Panc1 (cell line): ENCODE measurements at regions of chr15 and their contacts with region 1.

Region 1: GRCh38 chr15:77533578-77534430 is 98.9 kb downstream of the LINGO1 start:
- DNase-seq: no peak
- ATAC-seq: no peak
- H3K4me3 ChIP-seq: no peak overlapping the region
- H3K27ac ChIP-seq: peak overlapping the region; percentile 41; the same call in 1 of the 2 replicates
- H3K4me1 ChIP-seq: peaks cover 18% of the 10 kb centered on the region
- H3K27me3 ChIP-seq: no peaks in the 10 kb centered on the region
- CTCF ChIP-seq: no peak

Region 2: DNA sequence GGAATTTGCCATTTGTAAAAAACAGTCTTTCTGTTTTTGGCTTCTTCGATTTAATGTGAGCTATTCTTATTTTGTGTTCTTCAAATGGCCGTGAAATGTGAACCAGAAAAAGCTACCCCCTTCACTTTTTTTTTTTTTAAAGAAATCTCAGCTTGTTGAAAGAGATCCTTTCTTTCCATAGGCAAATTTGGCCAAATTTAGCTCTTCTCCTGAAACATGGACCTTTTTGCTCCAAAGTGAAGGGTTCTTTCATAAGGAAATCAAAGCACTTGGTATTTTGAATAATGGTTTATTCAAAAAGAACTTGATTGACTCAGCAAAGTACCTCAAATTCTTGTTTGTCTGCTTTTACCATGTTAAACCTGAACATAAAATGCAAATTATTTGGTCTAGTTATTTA is 592.2 kb before region 1 on chr15:
- CTCF ChIA-PET with region 1: no interaction called
- POLR2A ChIA-PET with region 1: interaction called, 13 read pairs
- in situ Hi-C with region 1: no loop called
- intact Hi-C with region 1: no loop called
- DNase-seq: no peak
- ATAC-seq: no peak
- H3K4me3 ChIP-seq: no peak overlapping the region
- H3K27ac ChIP-seq: no peak overlapping the region
- H3K4me1 ChIP-seq: no peaks in the 10 kb centered on the region
- H3K27me3 ChIP-seq: no peaks in the 10 kb centered on the region
- CTCF ChIP-seq: no peak

Region 3: GRCh38 chr15:77607111-77607893 is 73.5 kb after region 1 on chr15:
- CTCF ChIA-PET with region 1: no interaction called
- POLR2A ChIA-PET with region 1: no interaction called
- in situ Hi-C with region 1: no loop called
- intact Hi-C with region 1: no loop called
- DNase-seq: no peak
- ATAC-seq: peak; percentile 24; the same call in 1 of the 2 replicates
- H3K4me3 ChIP-seq: no peak overlapping the region
- H3K27ac ChIP-seq: peak overlapping the region; percentile 51; the same call in 1 of the 2 replicates
- H3K4me1 ChIP-seq: peaks cover 31% of the 10 kb centered on the region; the same call in 1 of the 2 replicates
- H3K27me3 ChIP-seq: no peaks in the 10 kb centered on the region
- CTCF ChIP-seq: no peak